ENCODE measurements at regions of chr1 and their contacts with region 1.

Region 1: DNA sequence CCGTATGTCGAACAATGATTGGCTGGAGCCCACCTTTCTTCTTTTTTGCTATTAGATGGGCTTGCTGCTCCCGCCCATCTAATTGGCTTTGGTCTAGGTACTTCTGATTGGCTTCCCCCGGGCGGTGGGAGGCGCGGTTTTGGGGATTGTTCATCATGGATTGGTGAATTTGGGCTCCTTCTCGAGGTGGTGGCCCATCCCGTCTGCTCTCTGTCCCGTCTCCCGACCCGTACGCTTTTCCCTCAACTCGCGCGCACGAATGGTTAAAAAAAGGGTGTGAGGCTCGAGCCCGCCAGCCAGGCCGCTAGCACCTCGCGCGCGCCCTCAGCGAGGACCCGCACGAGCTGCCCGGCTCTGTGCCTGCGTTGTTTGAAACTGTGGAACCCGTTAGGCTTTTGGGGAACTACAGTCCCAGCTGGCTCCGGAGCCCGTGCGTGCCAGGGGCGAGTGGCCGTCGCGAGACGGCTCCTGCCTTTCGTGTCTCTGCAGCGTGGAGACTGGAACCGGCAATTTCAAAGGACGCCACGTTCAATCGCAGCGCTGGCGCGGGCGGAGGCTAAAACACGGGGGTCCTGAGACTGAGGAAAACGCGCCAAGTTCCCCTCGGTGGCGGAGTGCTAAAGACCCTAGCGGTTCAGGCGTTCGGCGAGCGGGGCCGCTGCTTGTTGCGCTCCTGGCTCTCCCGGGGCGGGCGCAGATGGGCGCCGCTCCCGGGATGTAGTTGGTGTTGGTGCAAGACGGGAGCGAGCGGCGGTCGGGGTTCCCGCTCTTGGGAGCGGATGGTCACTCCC is at the start of gene USP1:
- DNase-seq: peak; percentile 99
- H3K4me3 Mint-ChIP-seq: peak within 1 kb of the TSS; percentile 91
- H3K27ac Mint-ChIP-seq: peak within 1 kb of the TSS; percentile 98
- H3K4me1 Mint-ChIP-seq: peaks cover 40% of the 10 kb centered on the region
- H3K27me3 Mint-ChIP-seq: no peaks in the 10 kb centered on the region
- total RNA-seq, gene USP1: 74.6 to 78.6 TPM

Region 2: DNA sequence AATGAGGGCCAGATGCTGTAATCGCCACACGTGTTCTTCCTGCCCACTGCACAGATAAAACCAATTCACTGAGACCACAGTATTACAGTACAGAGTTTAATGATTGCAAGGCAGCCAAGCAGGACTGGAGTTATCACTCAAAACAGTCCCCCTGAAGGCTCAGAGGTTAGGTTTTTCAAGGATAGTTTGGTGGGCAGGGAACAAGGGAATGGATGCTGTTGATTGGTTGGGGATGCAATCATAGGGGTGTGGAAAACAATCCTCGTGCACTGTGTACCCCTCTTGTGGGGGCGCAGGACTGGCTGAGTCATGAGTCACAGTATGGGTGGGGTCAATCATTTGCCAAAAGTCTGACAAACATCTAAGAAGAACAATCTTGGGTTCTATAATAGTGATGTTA is 12.2 kb before region 1 on chr1:
- CTCF ChIA-PET with region 1: interaction called, 7 read pairs
- POLR2A ChIA-PET with region 1: interaction called, 11 read pairs
- DNase-seq: no peak
- H3K4me3 Mint-ChIP-seq: no peak overlapping the region
- H3K27ac Mint-ChIP-seq: no peak overlapping the region
- H3K4me1 Mint-ChIP-seq: peaks cover 3% of the 10 kb centered on the region
- H3K27me3 Mint-ChIP-seq: peaks cover 2% of the 10 kb centered on the region

Region 3: GRCh38 chr1:62450301-62450700 is 13.6 kb after region 1 on chr1:
- CTCF ChIA-PET with region 1: interaction called, 6 read pairs
- POLR2A ChIA-PET with region 1: interaction called, 82 read pairs
- DNase-seq: no peak
- H3K4me3 Mint-ChIP-seq: no peak overlapping the region
- H3K27ac Mint-ChIP-seq: peak overlapping the region; percentile 72
- H3K4me1 Mint-ChIP-seq: peaks cover 46% of the 10 kb centered on the region
- H3K27me3 Mint-ChIP-seq: no peaks in the 10 kb centered on the region

Region 4: GRCh38 chr1:62467092-62467491 is 30.4 kb after region 1 on chr1:
- CTCF ChIA-PET with region 1: no interaction called
- POLR2A ChIA-PET with region 1: no interaction called
- DNase-seq: no peak
- H3K4me3 Mint-ChIP-seq: no peak overlapping the region
- H3K27ac Mint-ChIP-seq: no peak overlapping the region
- H3K4me1 Mint-ChIP-seq: peaks cover 4% of the 10 kb centered on the region
- H3K27me3 Mint-ChIP-seq: no peaks in the 10 kb centered on the region

Region 5: DNA sequence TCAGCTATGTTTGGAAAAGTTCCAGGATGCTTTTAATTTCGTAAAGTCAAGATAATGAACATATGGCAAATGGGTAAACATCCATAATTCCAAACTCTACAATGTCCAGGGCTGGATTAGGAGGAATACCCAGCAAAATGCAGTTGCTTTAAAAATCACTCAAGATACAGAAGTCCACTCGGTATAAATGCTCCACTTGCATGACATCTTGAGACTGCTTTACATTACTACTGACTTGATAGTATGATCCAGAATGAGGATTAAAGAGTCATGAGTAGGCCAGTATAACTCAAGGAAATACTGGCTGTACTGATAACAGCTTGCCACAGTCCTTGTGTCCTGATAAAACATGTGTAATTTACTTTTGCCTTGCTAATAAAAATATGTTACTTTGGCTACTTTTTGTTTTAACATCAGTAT is 102.4 kb after region 1 on chr1:
- CTCF ChIA-PET with region 1: no interaction called
- POLR2A ChIA-PET with region 1: no interaction called
- DNase-seq: no peak
- H3K4me3 Mint-ChIP-seq: no peak overlapping the region
- H3K27ac Mint-ChIP-seq: no peak overlapping the region
- H3K4me1 Mint-ChIP-seq: no peaks in the 10 kb centered on the region
- H3K27me3 Mint-ChIP-seq: no peaks in the 10 kb centered on the region

Region 6: DNA sequence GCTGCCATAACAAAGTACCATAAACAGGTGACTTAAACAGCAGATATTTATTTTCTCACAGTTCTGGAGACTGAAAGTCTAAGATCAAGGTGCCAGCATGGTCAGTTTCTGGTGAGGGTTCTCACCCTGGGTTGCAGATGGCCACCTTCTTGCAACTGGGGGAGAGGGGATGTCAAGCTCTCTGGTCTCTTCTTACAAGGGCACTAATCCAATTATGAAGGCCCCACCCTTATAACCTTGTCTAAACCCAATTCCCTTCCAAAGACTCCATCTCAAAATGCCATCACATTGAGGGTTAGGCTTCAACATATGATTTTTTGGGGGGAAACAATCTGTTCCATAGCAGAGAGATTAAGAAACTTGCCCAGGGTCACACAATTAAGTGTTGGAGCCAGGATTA is 135.8 kb after region 1 on chr1:
- CTCF ChIA-PET with region 1: no interaction called
- POLR2A ChIA-PET with region 1: no interaction called
- DNase-seq: no peak
- H3K4me3 Mint-ChIP-seq: no peak overlapping the region
- H3K27ac Mint-ChIP-seq: no peak overlapping the region
- H3K4me1 Mint-ChIP-seq: peaks cover 4% of the 10 kb centered on the region
- H3K27me3 Mint-ChIP-seq: no peaks in the 10 kb centered on the region

Measured in activated CD4-positive, alpha-beta memory T cell treated with anti-CD3 and anti-CD28 coated beads, Interleukin-2, amount 10 ng/mL, durations not matched to agents 7 days and 5 days (primary cell).